Activated CD8-positive, alpha-beta T cell treated with anti-CD3 and anti-CD28 coated beads for 36 hours (primary cell): ENCODE measurements at regions of chr19 and their contacts with region 1.

Region 1: GRCh38 chr19:36850559-36851442 is at the start of gene ZNF345:
- DNase-seq: peak; percentile 93
- ATAC-seq: peak; percentile 81
- H3K4me3 Mint-ChIP-seq: no peak within 1 kb of the TSS
- H3K27ac Mint-ChIP-seq: no peak within 1 kb of the TSS
- H3K4me1 Mint-ChIP-seq: peaks cover 20% of the 10 kb centered on the region
- H3K27me3 Mint-ChIP-seq: no peaks in the 10 kb centered on the region
- CTCF ChIP-seq: no peak
- total RNA-seq, gene ZNF345: 3.6 to 5.1 TPM

Region 2: DNA sequence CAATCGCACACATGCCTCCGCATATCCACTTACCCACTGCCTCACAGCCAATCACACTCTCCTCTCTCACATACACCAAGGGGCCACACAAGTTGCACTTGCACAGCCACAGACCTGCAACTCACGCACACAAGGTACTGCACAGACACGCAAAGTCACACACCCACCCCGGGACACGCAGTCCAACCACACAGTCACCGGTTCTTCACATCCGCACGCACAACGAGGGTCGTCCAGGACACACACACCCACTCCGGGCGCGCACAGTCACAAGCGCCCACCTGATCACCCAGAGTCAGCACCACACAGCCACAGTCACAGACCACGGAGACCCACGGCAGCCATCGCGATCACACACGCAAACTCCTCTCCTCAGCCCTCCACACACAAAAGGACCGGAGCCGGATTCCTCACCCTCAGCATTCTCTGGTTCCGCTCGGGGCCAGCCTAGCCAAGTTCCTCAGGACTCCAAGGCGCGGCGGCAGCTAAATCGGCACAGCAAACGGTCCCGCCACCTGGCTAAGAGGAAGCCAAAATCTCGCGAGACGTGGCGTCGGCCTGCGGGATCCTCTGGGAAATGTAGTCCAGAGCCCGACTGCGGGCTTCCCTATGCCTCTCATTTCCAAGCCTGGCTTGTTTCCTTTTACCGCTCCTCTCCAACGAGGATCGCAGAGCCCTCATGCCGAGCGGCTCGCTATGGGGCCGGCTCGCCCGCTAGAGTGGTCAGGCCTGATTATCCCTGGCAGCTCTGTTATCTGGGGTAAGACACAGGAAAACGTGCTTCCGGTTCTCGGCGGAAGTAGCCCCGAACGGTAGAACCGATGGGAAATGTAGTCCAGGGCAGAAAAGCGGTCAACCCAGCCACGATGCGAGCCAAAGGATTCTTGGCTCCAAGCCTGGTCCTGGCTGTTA is 78.2 kb before region 1 on chr19 and contains the start of gene ZNF850:
- CTCF ChIA-PET with region 1: no interaction called
- POLR2A ChIA-PET with region 1: interaction called, 19 read pairs
- intact Hi-C with region 1: loop called (anchors 10 kb)
- DNase-seq: peak; percentile 97
- ATAC-seq: peak; percentile 90
- H3K4me3 Mint-ChIP-seq: peak within 1 kb of the TSS; percentile 98
- H3K27ac Mint-ChIP-seq: peak within 1 kb of the TSS; percentile 97
- H3K4me1 Mint-ChIP-seq: peaks cover 11% of the 10 kb centered on the region
- H3K27me3 Mint-ChIP-seq: no peaks in the 10 kb centered on the region
- CTCF ChIP-seq: no peak
- total RNA-seq, gene ZNF850: 10.6 to 11.7 TPM

Region 3: GRCh38 chr19:36837906-36838783 is 12.7 kb before region 1 on chr19 and contains the start of gene ZNF790:
- CTCF ChIA-PET with region 1: interaction called, 7 read pairs
- POLR2A ChIA-PET with region 1: interaction called, 60 read pairs
- intact Hi-C with region 1: no loop called
- DNase-seq: peak; percentile 94
- ATAC-seq: peak; percentile 94
- H3K4me3 Mint-ChIP-seq: no peak within 1 kb of the TSS
- H3K27ac Mint-ChIP-seq: no peak within 1 kb of the TSS
- H3K4me1 Mint-ChIP-seq: peaks cover 9% of the 10 kb centered on the region
- H3K27me3 Mint-ChIP-seq: no peaks in the 10 kb centered on the region
- CTCF ChIP-seq: no peak
- total RNA-seq, gene ZNF790: 8.9 to 9.7 TPM

Region 4: DNA sequence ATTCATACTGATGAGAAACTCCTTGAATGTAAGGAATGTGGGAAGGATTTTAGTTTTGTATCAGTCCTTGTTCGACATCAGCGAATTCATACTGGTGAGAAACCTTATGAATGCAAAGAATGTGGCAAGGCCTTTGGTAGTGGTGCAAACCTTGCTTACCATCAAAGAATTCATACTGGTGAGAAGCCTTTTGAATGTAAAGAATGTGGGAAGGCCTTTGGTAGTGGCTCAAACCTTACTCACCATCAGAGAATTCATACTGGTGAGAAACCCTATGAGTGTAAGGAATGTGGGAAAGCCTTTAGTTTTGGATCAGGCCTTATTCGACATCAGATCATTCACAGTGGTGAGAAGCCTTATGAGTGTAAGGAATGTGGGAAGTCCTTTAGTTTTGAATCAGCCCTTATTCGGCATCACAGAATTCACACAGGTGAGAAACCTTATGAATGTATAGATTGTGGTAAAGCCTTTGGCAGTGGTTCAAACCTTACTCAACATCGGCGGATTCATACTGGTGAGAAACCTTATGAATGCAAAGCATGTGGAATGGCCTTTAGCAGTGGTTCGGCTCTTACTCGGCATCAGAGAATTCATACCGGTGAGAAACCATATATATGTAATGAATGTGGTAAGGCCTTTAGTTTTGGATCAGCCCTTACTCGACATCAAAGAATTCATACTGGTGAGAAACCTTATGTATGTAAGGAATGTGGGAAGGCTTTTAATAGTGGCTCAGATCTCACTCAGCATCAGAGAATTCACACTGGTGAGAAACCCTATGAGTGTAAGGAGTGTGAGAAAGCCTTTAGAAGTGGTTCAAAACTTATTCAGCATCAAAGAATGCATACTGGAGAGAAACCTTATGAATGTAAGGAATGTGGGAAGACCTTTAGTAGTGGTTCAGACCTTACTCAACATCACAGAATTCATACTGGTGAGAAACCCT is 26.5 kb after region 1 on chr19:
- CTCF ChIA-PET with region 1: no interaction called
- POLR2A ChIA-PET with region 1: no interaction called
- intact Hi-C with region 1: no loop called
- DNase-seq: no peak
- ATAC-seq: no peak
- H3K4me3 Mint-ChIP-seq: no peak overlapping the region
- H3K27ac Mint-ChIP-seq: no peak overlapping the region
- H3K4me1 Mint-ChIP-seq: no peaks in the 10 kb centered on the region
- H3K27me3 Mint-ChIP-seq: no peaks in the 10 kb centered on the region
- CTCF ChIP-seq: no peak